ENCODE measurements at regions of chr17 and their contacts with region 1.

Region 1: GRCh38 chr17:80899402-80900268 is 92.0 kb upstream of the CHMP6 start:
- DNase-seq: peak; percentile 87
- H3K4me3 Mint-ChIP-seq: no peak overlapping the region
- H3K27ac Mint-ChIP-seq: peak overlapping the region; percentile 81
- H3K4me1 Mint-ChIP-seq: peaks cover 71% of the 10 kb centered on the region
- H3K27me3 Mint-ChIP-seq: no peaks in the 10 kb centered on the region

Region 2: GRCh38 chr17:80426681-80427326 is 472.8 kb before region 1 on chr17:
- CTCF ChIA-PET with region 1: interaction called, 29 read pairs
- POLR2A ChIA-PET with region 1: interaction called, 3 read pairs
- DNase-seq: peak; percentile 88
- H3K4me3 Mint-ChIP-seq: no peak overlapping the region
- H3K27ac Mint-ChIP-seq: no peak overlapping the region
- H3K4me1 Mint-ChIP-seq: peaks cover 19% of the 10 kb centered on the region
- H3K27me3 Mint-ChIP-seq: peaks cover 2% of the 10 kb centered on the region

Region 3: DNA sequence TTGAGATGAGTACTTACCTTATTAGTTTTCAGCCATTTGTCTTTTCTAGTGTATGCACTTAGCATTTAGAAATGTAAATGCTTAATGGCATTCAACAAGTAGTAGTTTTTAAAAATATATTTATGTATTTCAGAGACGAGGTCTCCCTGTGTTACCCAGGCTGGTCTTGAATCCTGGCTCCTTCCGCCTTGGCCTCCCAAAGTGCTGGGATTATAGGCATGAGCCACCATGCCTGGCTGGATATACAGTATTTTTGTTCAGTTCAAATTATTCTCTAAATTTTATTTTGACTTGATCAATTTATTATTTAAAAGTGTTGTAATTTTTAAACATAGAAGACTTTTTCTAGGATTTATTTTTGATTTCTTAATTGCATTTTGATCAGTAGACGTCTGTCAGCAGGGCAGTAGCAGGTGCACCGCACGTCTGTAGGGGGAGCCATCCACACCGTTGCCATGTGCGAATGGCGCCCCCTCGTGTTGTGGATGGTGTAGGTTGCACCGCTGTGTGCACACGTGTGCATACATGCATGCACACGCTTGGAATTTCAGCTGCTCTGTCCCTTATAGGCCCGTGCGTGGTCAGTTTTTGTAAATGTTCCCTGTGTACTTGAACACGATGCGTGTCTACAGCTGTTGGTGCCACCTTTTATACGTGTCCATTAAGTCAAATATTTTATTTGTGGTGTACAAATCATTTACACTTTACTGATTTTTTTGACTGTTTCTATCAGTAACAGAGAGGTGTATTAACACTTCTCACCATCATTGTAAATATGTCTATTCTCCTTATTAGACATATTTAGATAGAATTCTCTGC is 324.4 kb before region 1 on chr17:
- CTCF ChIA-PET with region 1: interaction called, 24 read pairs
- POLR2A ChIA-PET with region 1: no interaction called
- DNase-seq: peak; percentile 93
- H3K4me3 Mint-ChIP-seq: no peak overlapping the region
- H3K27ac Mint-ChIP-seq: no peak overlapping the region
- H3K4me1 Mint-ChIP-seq: peaks cover 14% of the 10 kb centered on the region
- H3K27me3 Mint-ChIP-seq: no peaks in the 10 kb centered on the region

Region 4: GRCh38 chr17:80811181-80812105 is 88.2 kb before region 1 on chr17:
- CTCF ChIA-PET with region 1: interaction called, 11 read pairs
- POLR2A ChIA-PET with region 1: no interaction called
- DNase-seq: peak; percentile 64
- H3K4me3 Mint-ChIP-seq: peak overlapping the region; percentile 24
- H3K27ac Mint-ChIP-seq: peak overlapping the region; percentile 99
- H3K4me1 Mint-ChIP-seq: peaks cover 60% of the 10 kb centered on the region
- H3K27me3 Mint-ChIP-seq: no peaks in the 10 kb centered on the region

Region 5: DNA sequence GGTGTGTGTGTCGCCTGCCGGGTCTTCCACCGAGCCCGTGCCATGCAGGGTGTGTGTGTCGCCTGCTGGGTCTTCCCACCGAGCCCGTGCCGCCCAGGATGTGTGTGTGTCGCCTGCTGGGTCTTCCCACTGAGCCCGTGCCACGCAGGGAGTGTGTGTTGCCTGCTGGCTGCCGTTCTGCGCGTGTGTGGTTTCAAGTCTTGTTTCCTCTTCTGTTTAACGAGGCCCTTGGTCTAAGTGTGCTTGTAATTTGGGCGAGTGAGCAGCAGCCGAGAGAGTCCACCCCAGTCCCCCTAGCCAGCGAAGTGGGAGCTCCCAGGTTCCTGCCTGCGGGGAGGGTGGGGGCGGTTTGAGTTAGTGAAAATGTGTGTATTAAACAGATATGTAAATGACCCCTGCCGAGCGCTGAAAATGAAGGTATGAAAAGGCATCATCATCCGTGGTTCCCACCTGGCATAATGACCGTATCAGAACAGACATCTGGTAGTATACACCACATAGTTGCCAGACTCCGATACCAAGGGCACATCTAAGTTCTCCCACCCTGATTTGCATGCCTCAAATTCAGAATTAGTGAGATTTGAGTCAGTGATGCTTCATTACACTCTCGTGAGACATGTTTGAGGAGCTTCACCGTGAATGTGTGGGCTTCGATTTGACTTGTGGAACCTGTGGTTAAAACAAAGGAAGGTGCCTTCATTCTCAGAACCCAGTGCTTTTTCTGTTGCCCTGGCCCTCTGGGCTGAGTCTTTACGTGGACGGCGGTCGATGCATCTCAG is 22.5 kb before region 1 on chr17:
- CTCF ChIA-PET with region 1: interaction called, 9 read pairs
- POLR2A ChIA-PET with region 1: interaction called, 10 read pairs
- DNase-seq: peak; percentile 77
- H3K4me3 Mint-ChIP-seq: peak overlapping the region; percentile 72
- H3K27ac Mint-ChIP-seq: peak overlapping the region; percentile 100
- H3K4me1 Mint-ChIP-seq: peaks cover 68% of the 10 kb centered on the region
- H3K27me3 Mint-ChIP-seq: no peaks in the 10 kb centered on the region

Region 6: DNA sequence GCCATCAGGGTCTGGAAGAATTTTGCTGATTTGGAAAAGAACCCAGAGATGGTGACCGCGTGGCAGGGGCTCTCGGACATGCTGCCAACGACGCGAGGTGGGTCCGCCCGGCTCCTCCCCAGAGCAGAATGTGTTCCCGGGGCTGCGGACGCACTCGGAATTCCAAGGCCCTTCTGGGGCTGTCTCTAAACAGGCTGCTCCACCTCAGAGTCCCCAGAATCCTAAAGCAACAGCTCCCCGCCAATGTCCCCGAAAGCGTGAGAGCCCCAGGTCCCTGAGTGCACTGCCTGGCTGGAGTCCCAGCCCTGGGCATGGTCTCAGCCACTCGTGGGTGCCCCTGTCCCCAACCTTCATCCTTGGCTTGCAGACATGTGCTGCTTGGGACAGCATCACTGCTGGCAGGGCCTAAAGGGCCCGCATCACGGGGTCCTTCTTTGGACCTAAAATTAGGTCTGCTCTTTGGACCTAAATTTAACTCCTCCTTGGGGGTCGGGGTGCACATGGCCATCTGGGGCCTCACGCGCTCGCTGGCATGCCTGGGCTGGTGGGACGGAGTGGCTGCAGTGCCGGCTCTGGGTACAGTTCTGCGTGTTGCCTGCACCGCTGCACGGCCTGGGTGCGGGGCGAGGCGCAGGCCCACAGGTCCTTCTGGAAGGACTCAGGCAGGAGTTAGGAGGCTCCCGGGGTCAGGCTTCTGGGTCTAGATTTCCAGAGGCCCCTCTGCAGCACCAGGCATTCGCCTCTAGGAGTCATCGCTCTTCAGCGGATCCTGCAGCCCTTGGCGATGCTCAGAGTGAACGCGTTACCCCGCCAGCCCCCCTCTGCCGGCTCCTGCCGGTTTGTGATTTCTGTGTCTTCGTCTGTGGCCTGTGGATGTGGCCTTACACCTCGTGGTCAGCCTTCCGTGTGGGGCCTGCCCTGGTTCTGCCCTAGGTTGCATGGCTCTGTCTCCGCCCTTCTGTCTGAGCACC is 50.1 kb after region 1 on chr17:
- CTCF ChIA-PET with region 1: no interaction called
- POLR2A ChIA-PET with region 1: no interaction called
- DNase-seq: no peak
- H3K4me3 Mint-ChIP-seq: no peak overlapping the region
- H3K27ac Mint-ChIP-seq: peak overlapping the region; percentile 42
- H3K4me1 Mint-ChIP-seq: peaks cover 13% of the 10 kb centered on the region
- H3K27me3 Mint-ChIP-seq: no peaks in the 10 kb centered on the region